Activated B cell treated with CpG ODN at 0.5 μM for 24 hours (primary cell): ENCODE measurements at regions of chr12 and their contacts with region 1.

Region 1: DNA sequence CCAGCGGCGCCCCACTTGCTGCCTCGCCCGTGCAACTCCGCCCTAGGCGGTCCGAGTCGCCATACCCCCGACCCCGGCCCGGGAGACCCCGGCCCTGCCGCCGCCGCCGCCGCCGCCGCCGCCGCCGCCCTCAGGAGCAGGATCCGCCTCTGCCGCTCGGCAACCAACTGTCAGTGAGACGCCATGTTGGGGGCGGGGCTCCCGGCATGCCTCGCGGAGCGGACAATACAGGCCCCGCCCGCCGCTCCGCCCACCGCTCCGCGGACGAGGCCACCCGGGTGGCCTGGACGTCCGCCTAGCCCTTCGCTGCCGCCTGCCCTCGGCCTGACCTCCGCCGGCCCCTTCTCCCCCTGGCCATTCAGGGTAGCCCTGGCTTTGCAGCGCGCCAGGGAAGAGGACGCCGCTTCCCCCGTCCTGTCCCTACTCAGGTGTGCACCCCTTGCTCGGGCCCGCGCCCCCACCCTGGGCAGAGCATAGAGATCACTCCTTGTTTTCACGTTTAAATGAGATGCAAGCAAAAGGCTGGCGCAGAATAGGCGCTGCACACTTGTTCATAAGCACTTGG is at the start of gene HECTD4:
- DNase-seq: peak; percentile 96
- ATAC-seq: peak; percentile 96
- H3K4me3 Mint-ChIP-seq: peak within 1 kb of the TSS; percentile 97
- H3K27ac Mint-ChIP-seq: peak within 1 kb of the TSS; percentile 88
- H3K4me1 Mint-ChIP-seq: peaks cover 32% of the 10 kb centered on the region
- H3K27me3 Mint-ChIP-seq: no peaks in the 10 kb centered on the region
- CTCF ChIP-seq: no peak
- total RNA-seq, gene HECTD4: 76.3 and 98.8 TPM in 2 replicates

Region 2: DNA sequence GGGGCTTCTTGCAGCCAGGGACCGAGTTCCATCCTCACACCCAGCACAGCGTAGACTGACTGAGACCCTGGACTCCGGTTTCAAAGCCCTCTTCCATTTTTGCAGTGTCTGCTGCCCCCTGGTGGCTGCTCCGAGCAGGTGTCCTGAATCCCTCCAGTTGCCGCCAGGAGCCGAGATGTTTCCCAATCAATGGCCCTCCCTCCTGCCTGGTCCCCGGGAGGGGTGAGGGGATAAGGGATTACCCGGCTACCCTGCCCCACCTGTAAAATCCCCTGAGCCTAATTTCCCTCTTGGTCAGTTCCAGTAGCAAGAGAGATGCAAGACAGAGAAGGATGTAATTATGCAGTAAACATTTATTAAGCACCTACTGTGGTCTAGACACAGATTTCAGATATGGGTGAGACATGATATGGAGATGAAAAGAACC is 1068.5 kb before region 1 on chr12:
- CTCF ChIA-PET with region 1: no interaction called
- POLR2A ChIA-PET with region 1: no interaction called
- intact Hi-C with region 1: no loop called
- DNase-seq: peak; percentile 65
- ATAC-seq: peak; percentile 71
- H3K4me3 Mint-ChIP-seq: no peak overlapping the region
- H3K27ac Mint-ChIP-seq: no peak overlapping the region
- H3K4me1 Mint-ChIP-seq: peaks cover 7% of the 10 kb centered on the region
- H3K27me3 Mint-ChIP-seq: peaks cover 12% of the 10 kb centered on the region
- CTCF ChIP-seq: peak; percentile 57

Region 3: GRCh38 chr12:111841750-111842555 is 540.4 kb before region 1 on chr12 and contains the start of gene MAPKAPK5:
- CTCF ChIA-PET with region 1: no interaction called
- POLR2A ChIA-PET with region 1: no interaction called
- intact Hi-C with region 1: loop called (anchors 1 kb)
- DNase-seq: peak; percentile 98
- ATAC-seq: peak; percentile 90
- H3K4me3 Mint-ChIP-seq: peak within 1 kb of the TSS; percentile 95
- H3K27ac Mint-ChIP-seq: peak within 1 kb of the TSS; percentile 97
- H3K4me1 Mint-ChIP-seq: peaks cover 45% of the 10 kb centered on the region
- H3K27me3 Mint-ChIP-seq: no peaks in the 10 kb centered on the region
- CTCF ChIP-seq: no peak
- total RNA-seq, gene MAPKAPK5: 51.7 and 61.2 TPM in 2 replicates

Region 4: GRCh38 chr12:112191840-112192321 is 190.4 kb before region 1 on chr12:
- CTCF ChIA-PET with region 1: interaction called, 99 read pairs
- POLR2A ChIA-PET with region 1: no interaction called
- intact Hi-C with region 1: no loop called
- DNase-seq: no peak
- ATAC-seq: no peak
- H3K4me3 Mint-ChIP-seq: no peak overlapping the region
- H3K27ac Mint-ChIP-seq: no peak overlapping the region
- H3K4me1 Mint-ChIP-seq: no peaks in the 10 kb centered on the region
- H3K27me3 Mint-ChIP-seq: no peaks in the 10 kb centered on the region
- CTCF ChIP-seq: no peak

Region 5: DNA sequence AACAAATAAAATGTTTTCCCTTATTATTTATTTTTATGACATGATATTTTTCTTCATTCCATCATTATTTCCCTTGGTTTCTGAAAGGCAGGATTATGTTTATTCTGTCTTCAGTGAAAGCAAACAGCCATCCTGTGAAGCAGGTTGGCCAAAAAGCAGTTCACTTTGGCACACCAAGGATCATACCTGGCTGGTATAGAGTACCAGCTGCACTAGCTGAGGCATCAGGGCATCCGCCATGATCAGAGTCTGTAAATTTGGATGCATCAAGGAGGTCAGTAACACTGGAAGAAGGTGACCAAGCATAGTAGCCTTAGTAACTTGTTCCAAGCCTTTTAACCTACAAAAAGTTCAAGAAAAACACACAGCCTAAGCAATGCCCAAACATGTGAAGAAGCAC is 123.4 kb before region 1 on chr12:
- CTCF ChIA-PET with region 1: interaction called, 10 read pairs
- POLR2A ChIA-PET with region 1: no interaction called
- intact Hi-C with region 1: no loop called
- DNase-seq: no peak
- ATAC-seq: no peak
- H3K4me3 Mint-ChIP-seq: no peak overlapping the region
- H3K27ac Mint-ChIP-seq: no peak overlapping the region
- H3K4me1 Mint-ChIP-seq: no peaks in the 10 kb centered on the region
- H3K27me3 Mint-ChIP-seq: no peaks in the 10 kb centered on the region
- CTCF ChIP-seq: no peak

Region 6: DNA sequence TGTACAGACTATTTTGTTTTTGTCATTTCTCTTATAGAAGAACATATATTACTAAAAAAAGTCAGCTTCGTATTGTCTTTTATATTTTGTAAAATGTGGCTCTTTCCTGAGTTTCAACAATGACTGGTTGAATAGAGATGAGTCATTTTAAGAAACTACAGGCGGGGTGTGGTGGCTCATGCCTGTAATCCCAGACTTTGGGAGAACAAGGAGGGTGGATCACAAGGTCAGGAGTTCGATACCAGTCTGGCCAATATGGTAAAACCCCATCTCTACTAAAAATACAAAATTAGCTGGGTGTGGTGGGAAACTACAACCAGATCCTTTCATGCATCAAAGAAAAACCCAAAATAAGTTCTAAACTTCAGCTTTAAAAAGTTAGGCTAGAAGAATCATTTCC is 28.9 kb before region 1 on chr12:
- CTCF ChIA-PET with region 1: interaction called, 4 read pairs
- POLR2A ChIA-PET with region 1: interaction called, 9 read pairs
- intact Hi-C with region 1: loop called (anchors 2 kb)
- DNase-seq: no peak
- ATAC-seq: peak; percentile 19
- H3K4me3 Mint-ChIP-seq: peak overlapping the region; percentile 60
- H3K27ac Mint-ChIP-seq: peak overlapping the region; percentile 79
- H3K4me1 Mint-ChIP-seq: peaks cover 73% of the 10 kb centered on the region
- H3K27me3 Mint-ChIP-seq: no peaks in the 10 kb centered on the region
- CTCF ChIP-seq: no peak